ENCODE measurements at regions of chr11 and their contacts with region 1.

Region 1: DNA sequence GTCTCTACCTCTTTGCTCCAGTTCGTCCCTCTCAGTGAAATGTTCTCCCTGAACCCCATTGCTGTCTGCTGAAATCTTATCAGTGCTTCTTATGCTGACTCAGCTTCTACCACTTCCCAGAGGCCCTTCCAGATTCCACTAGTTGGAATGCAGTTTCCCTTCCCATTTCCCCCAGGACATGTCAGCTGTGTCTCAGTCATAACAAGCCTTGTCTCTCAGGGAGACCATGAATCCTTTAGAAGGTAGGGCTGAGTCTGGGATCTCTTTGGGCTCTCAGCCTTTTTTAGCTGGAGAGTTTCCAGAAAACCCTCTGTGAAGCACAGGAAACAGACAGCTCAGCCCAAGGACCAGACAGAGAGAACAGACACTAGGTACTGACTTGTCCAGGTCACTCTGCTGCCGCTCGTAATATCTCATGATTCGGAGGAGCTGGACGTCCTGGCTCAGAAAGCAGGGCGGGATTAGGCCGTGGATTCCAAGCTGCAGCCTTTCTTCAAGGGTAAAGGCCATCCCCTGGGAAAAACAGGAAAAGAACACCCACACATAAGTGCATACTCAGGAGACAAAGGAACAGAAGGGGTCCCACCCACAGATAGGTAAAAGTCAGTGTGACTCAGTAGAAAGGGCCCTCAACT is 113.0 kb downstream of the ME3 start:
- DNase-seq: no peak
- H3K4me3 ChIP-seq: no peak overlapping the region
- H3K27me3 ChIP-seq: no peaks in the 10 kb centered on the region
- CTCF ChIP-seq: no peak

Region 2: DNA sequence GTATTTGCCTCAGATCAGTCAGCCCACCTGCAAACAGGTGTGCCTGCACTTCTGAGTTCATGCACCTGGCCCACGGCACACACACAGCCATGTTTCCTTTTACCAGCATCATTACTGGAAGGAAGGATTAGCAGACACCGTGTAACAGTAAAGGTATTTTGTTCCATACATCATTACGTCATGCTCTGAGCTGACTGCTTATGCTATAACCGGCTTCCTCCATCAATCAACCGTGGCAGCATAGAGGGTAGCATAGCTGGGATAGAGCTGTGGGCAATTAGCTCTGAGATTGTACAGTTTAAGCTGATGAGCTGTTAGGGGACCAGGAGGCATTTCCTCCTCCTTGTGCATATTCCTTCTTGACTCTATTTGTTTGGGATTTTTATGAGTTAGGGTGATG is 10.6 kb after region 1 on chr11:
- CTCF ChIA-PET with region 1: interaction called, 10 read pairs
- POLR2A ChIA-PET with region 1: no interaction called
- DNase-seq: no peak
- H3K4me3 ChIP-seq: no peak overlapping the region
- H3K27me3 ChIP-seq: no peaks in the 10 kb centered on the region
- CTCF ChIP-seq: no peak

Region 3: DNA sequence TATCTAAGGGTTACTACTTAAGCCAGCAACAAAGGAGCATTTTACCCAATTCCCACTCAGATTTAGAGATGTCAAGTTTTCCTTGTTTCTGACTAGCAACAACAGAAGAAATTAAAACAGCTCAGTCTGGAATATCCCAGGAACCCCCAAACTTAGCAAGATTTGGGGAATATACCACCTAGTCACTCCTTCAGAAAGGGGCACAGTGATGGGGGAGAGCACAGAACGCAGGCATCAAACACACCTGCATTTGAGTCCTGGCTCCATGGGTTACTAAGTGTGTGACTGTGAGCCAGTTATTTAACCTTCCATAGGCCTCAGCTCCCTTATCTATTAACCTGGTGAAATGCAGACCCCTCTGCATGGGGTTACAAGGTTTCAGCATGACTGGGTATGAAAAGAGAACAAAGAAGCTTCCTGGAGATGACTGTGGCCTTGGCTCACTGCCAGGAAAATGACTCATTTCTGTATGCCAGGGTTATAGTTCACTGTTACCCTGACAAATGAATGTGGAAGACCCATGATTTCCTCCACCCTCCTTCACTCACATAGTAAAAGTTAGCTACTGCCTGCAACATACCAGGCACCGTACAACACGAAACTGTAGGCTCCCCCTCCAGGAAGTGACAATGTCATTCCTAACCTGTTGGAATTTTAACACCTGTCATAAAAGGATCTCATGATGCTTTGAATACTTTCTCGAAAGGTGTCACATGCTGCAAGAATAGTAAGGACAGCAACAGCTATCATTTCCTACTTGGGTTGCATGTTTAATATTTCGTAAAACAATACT is 33.4 kb after region 1 on chr11:
- CTCF ChIA-PET with region 1: no interaction called
- POLR2A ChIA-PET with region 1: no interaction called
- DNase-seq: no peak
- H3K4me3 ChIP-seq: no peak overlapping the region
- H3K27me3 ChIP-seq: no peaks in the 10 kb centered on the region
- CTCF ChIP-seq: no peak

Region 4: GRCh38 chr11:86802601-86803051 is 243.2 kb after region 1 on chr11:
- CTCF ChIA-PET with region 1: no interaction called
- POLR2A ChIA-PET with region 1: no interaction called
- DNase-seq: no peak
- H3K4me3 ChIP-seq: peak overlapping the region; percentile 61
- H3K27me3 ChIP-seq: no peaks in the 10 kb centered on the region
- CTCF ChIP-seq: peak; percentile 62

Measured in BJ (cell line).